Activated T-helper 2 cell treated with anti-CD3 and anti-CD28 coated beads, Interferon-gamma antibody, Interleukin-2, Interleukin-4, amounts not matched to agents 10 μg/mL and 5 μg/mL and 100 μg/mL, durations not matched to agents 14 hours and 24 hours and 36 hours (primary cell): ENCODE measurements at regions of chrX and their contacts with region 1.

Region 1: GRCh38 chrX:111445486-111445885 is 33.5 kb upstream of the DCX start:
- DNase-seq: no peak
- H3K4me3 Mint-ChIP-seq: no peak overlapping the region
- H3K27ac Mint-ChIP-seq: no peak overlapping the region
- H3K4me1 Mint-ChIP-seq: peaks cover 2% of the 10 kb centered on the region
- H3K27me3 Mint-ChIP-seq: no peaks in the 10 kb centered on the region

Region 2: DNA sequence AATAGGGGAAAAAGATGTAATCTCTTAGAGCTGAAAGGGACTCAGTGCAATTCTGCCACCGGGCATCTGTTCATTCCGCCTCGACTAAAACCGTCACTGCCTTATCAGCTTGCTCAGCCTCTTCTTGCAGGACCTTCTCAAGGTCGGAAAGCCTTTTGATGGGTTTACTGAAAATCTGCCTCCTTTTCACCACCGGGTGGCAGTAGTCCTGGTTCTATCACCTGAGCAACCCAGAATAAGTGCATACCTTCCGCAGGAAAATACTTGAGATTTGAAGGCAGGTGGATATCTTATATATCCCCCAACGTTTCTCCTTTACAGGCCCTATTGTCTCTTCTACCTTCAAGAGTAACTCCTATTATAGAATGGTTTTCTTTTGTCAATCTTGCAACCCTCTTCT is 452.9 kb before region 1 on chrX:
- intact Hi-C with region 1: loop called (anchors 5 kb)
- DNase-seq: no peak
- H3K4me3 Mint-ChIP-seq: no peak overlapping the region
- H3K27ac Mint-ChIP-seq: no peak overlapping the region
- H3K4me1 Mint-ChIP-seq: no peaks in the 10 kb centered on the region
- H3K27me3 Mint-ChIP-seq: peaks cover under 1% of the 10 kb centered on the region

Region 3: DNA sequence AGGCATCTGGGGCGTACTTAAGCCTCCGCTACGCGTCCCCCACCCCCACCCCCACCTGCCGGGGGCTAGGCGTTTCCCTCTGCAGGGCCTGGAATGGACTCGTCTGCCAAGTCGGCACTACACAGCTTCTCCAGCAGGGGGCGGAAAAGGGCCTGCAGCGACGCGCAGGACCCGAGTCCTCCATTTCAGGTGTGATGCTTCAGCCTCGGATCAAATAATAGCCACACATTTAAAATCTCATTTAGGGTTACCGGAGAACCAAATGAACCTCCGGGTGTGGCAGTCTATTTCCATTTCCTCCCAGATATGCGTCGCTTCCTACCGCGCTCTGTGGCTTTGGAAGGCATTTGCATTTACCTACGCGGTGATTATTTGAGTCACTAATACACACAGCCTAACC is 346.6 kb before region 1 on chrX:
- intact Hi-C with region 1: loop called (anchors 5 kb)
- DNase-seq: peak; percentile 46
- H3K4me3 Mint-ChIP-seq: no peak overlapping the region
- H3K27ac Mint-ChIP-seq: no peak overlapping the region
- H3K4me1 Mint-ChIP-seq: peaks cover 16% of the 10 kb centered on the region
- H3K27me3 Mint-ChIP-seq: peaks cover 25% of the 10 kb centered on the region

Region 4: DNA sequence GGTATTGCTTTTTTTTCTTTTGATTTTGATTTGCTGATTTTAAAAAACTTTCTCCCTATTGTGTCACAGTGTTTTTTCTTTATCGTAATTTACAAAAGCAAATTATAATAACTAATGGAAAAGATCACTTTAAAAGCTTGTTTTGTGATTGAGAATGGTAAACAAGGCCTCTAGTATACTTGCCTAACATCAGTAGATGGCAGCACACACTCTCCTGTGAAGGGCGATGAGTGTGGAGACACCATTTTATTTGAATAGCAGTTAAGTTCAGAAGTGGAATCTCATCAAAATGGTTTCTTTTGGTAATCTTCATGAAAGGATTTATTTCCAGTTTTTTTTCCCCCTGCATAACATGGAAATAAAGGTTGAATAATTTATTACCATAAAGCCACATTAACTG is 277.2 kb before region 1 on chrX:
- intact Hi-C with region 1: loop called (anchors 10 kb)
- DNase-seq: no peak
- H3K4me3 Mint-ChIP-seq: no peak overlapping the region
- H3K27ac Mint-ChIP-seq: no peak overlapping the region
- H3K4me1 Mint-ChIP-seq: peaks cover 12% of the 10 kb centered on the region
- H3K27me3 Mint-ChIP-seq: peaks cover 1% of the 10 kb centered on the region

Region 5: GRCh38 chrX:111372086-111372485 is 73.4 kb before region 1 on chrX:
- intact Hi-C with region 1: no loop called
- DNase-seq: no peak
- H3K4me3 Mint-ChIP-seq: no peak overlapping the region
- H3K27ac Mint-ChIP-seq: no peak overlapping the region
- H3K4me1 Mint-ChIP-seq: no peaks in the 10 kb centered on the region
- H3K27me3 Mint-ChIP-seq: no peaks in the 10 kb centered on the region